ENCODE measurements at regions of chr3 and their contacts with region 1.

Region 1: GRCh38 chr3:65785065-65785645 is 253.6 kb downstream of the MAGI1 start:
- DNase-seq: peak; percentile 17
- H3K4me3 Mint-ChIP-seq: no peak overlapping the region
- H3K27ac Mint-ChIP-seq: no peak overlapping the region
- H3K4me1 Mint-ChIP-seq: peaks cover 24% of the 10 kb centered on the region
- H3K27me3 Mint-ChIP-seq: no peaks in the 10 kb centered on the region
- CTCF ChIP-seq: peak; percentile 43

Region 2: DNA sequence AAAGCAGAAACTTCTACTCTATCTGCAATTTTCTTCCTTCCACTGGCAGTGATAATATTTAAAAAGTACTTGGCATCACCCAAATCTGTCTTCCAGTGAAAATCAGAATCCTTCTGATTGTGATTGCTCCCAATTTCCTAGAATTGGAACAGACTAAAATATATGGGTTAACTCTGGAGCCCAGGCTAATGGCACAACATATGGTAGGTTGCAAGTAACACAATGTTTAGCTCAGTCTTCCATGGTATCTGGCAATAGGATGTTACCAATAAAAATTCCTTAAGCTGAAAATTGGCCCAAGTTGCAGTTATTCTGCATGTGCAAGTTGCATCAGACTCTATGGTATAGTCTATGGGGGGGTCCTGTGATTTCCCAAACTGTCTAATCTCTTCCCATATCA is 823.9 kb before region 1 on chr3:
- CTCF ChIA-PET with region 1: interaction called, 12 read pairs
- intact Hi-C with region 1: no loop called
- DNase-seq: no peak
- H3K4me3 Mint-ChIP-seq: no peak overlapping the region
- H3K27ac Mint-ChIP-seq: no peak overlapping the region
- H3K4me1 Mint-ChIP-seq: no peaks in the 10 kb centered on the region
- H3K27me3 Mint-ChIP-seq: no peaks in the 10 kb centered on the region
- CTCF ChIP-seq: no peak

Region 3: DNA sequence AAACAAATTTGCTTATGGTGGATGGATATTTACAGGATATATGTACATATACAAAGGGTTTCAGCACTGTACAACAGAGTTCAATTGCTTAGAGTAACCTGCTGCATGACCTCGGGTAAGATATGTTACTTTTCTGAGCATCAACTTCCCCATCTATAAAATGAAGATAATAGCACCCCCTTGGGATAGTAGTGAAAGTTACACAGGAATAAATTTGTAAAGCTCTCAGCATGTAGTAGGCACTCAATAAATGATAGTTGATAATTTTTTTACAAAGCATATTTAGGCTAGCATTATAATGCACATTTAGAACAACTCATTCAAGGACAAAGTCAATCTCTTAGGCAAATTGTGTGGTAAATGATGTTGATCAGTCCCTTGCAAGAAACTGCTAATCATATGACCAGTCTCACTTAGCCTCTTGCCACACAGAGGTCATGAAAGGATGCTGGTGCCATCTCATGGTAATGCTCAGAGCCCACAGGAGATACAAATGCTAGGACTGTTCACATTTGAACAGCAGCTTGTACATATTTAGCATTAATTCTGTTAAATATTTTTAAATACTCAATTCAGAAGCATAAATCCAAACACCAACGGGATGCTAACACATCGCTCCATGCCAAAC is 129.7 kb after region 1 on chr3:
- CTCF ChIA-PET with region 1: no interaction called
- intact Hi-C with region 1: loop called (anchors 1 kb)
- DNase-seq: no peak
- H3K4me3 Mint-ChIP-seq: no peak overlapping the region
- H3K27ac Mint-ChIP-seq: peak overlapping the region; percentile 35
- H3K4me1 Mint-ChIP-seq: peaks cover 45% of the 10 kb centered on the region
- H3K27me3 Mint-ChIP-seq: no peaks in the 10 kb centered on the region
- CTCF ChIP-seq: peak; percentile 4

Region 4: DNA sequence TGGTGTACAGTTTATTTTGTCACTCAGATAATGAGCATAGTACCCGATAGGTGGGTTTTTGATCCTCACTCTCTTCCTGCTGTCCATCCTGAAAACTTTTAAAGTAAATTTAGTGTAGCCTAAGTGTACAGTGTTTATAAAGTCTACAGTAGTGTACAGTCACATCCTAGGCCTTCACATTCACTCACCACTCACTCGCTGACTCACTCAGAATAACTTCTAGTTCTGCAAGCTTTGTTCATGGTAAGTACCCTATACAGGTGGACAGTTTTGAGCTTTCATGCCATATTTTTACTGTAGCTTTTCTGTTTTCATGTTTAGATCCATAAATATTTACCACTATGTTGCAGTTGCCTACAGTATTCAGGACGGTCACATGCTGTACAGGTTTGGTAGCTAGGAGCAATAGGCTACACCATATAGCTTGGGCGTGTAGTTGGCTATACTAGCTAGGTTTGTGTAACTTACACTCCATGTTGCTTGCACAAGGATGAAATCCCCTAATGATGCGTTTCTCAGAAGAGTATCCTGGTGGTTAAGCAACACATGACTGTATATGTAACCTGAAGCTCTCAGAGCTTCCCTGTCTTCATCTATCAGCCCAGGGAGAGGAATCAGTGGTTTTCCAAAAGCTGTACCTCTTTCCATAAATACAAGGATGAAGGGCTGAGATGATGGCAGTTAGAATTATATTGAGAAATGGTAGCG is 348.0 kb after region 1 on chr3:
- CTCF ChIA-PET with region 1: interaction called, 4 read pairs
- intact Hi-C with region 1: loop called (anchors 5 kb)
- DNase-seq: no peak
- H3K4me3 Mint-ChIP-seq: no peak overlapping the region
- H3K27ac Mint-ChIP-seq: no peak overlapping the region
- H3K4me1 Mint-ChIP-seq: peaks cover 17% of the 10 kb centered on the region
- H3K27me3 Mint-ChIP-seq: no peaks in the 10 kb centered on the region
- CTCF ChIP-seq: no peak

Region 5: DNA sequence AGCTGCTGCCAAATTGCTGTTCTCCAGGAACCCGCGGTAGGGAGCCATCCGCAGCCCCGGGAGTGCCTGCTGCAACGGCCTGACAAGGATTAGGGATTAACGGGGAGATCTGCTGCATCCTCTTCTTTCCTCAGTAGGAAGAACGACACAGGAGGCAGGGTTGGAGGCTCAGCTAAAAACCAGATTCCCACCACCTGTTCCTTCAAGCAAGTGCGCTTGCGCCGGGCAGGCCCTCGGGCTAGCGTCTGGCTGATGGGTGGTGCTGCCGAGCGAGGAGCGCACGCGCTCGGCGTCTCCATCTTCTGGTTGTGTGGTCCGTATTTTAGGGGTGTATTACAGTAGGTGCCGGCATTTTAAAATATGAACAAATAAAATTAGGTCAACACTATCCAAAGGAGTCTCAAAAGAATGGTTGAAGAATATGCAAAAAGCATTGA is 410.2 kb after region 1 on chr3:
- CTCF ChIA-PET with region 1: no interaction called
- intact Hi-C with region 1: loop called (anchors 2 kb)
- DNase-seq: peak; percentile 77
- H3K4me3 Mint-ChIP-seq: peak overlapping the region; percentile 66
- H3K27ac Mint-ChIP-seq: no peak overlapping the region
- H3K4me1 Mint-ChIP-seq: no peaks in the 10 kb centered on the region
- H3K27me3 Mint-ChIP-seq: no peaks in the 10 kb centered on the region
- CTCF ChIP-seq: no peak